ENCODE measurements at regions of chr15 and their contacts with region 1.

Region 1: GRCh38 chr15:52528991-52529926 is 579 bp upstream of the MYO5A start:
- DNase-seq: peak; percentile 80 to 89
- ATAC-seq: peak; percentile 77 to 87 (median 85)
- H3K4me3 ChIP-seq: peak overlapping the region; percentile 94
- H3K27ac ChIP-seq: peak overlapping the region; percentile 91
- H3K4me1 ChIP-seq: peaks cover 19% of the 10 kb centered on the region
- H3K27me3 ChIP-seq: no peaks in the 10 kb centered on the region
- CTCF ChIP-seq: no peak

Region 2: DNA sequence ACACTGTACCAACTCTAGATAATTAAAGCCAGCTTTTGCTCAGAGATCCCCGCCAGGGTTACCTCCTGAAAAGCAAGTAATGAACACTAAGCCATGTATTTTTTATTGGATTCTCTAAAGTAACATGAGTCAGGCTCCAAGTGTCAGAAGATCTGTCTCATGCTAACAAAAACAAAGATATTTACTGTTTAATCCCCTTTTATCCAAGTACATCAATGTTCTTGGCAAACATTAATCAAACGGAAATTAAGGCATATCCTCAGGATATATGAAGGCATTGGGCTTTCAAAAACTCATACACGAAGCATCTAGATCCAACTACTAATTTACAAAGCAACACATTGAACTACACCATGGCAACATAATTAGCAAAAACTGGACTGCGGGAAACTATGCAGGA is 37.8 kb before region 1 on chr15:
- intact Hi-C with region 1: loop called in 1 of 2 experiments (anchors 5 kb)
- DNase-seq: no peak
- ATAC-seq: no peak
- H3K4me3 ChIP-seq: no peak overlapping the region
- H3K27ac ChIP-seq: no peak overlapping the region
- H3K4me1 ChIP-seq: peaks cover 45% of the 10 kb centered on the region
- H3K27me3 ChIP-seq: no peaks in the 10 kb centered on the region
- CTCF ChIP-seq: no peak

Region 3: GRCh38 chr15:52780172-52780980 is 251.1 kb after region 1 on chr15:
- intact Hi-C with region 1: no loop called
- DNase-seq: peak; percentile 54 to 76
- ATAC-seq: peak in 3 of 4 donors; percentile 55 to 78 (median 57)
- H3K4me3 ChIP-seq: peak overlapping the region; percentile 0
- H3K27ac ChIP-seq: no peak overlapping the region
- H3K4me1 ChIP-seq: peaks cover 18% of the 10 kb centered on the region
- H3K27me3 ChIP-seq: peaks cover 6 to 91% (median 30%) of the 10 kb centered on the region in 3 donors
- CTCF ChIP-seq: peak; percentile 90

Measured in psoas muscle (tissue), 8 donors.